ENCODE measurements at regions of chr11 and their contacts with region 1.

Region 1: GRCh38 chr11:42524534-42525227 is 787.1 kb upstream of the API5 start:
- DNase-seq: no peak
- H3K4me3 ChIP-seq: no peak overlapping the region
- CTCF ChIP-seq: peak; percentile 88

Region 2: GRCh38 chr11:41461057-41461681 is 1063.5 kb before region 1 on chr11:
- CTCF ChIA-PET with region 1: interaction called, 27 read pairs
- POLR2A ChIA-PET with region 1: no interaction called
- DNase-seq: no peak
- H3K4me3 ChIP-seq: no peak overlapping the region
- CTCF ChIP-seq: no peak

Region 3: GRCh38 chr11:41498726-41499125 is 1026.0 kb before region 1 on chr11:
- CTCF ChIA-PET with region 1: interaction called, 39 read pairs
- POLR2A ChIA-PET with region 1: no interaction called
- DNase-seq: no peak
- H3K4me3 ChIP-seq: no peak overlapping the region
- CTCF ChIP-seq: peak; percentile 23